ENCODE measurements at regions of chr16 and their contacts with region 1.

Region 1: DNA sequence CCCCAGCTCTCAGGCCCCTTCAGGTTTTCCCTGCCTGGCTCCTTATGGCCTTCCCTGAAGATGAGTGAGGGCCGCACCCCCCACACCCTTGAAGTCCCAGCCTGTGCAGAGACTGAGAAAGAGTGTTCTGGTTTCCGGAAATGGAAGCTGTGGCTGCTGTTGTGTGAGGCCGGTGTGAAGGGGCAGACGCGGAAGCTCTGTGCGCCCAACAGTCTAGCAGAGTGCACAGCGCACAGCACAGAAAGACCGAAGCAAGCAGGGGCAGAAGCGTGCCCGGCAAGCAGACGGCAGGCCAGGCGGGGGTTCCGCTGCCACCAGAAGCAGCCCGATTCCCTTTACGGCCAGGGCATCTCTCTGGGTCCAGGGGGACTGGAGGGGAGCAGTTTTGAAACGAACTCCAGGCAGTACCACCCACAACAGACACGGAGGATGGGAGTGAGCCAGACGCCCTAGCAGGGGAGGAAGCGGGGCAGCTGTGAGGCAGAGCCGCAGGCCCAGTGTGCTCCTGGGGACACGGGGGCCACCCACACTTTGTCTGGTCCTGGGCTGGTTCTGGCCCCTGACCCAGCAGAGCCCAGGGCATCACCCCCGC is 16.7 kb downstream of the TPSG1 start:
- DNase-seq: no peak
- H3K27ac ChIP-seq: no peak overlapping the region
- CTCF ChIP-seq: no peak

Region 2: DNA sequence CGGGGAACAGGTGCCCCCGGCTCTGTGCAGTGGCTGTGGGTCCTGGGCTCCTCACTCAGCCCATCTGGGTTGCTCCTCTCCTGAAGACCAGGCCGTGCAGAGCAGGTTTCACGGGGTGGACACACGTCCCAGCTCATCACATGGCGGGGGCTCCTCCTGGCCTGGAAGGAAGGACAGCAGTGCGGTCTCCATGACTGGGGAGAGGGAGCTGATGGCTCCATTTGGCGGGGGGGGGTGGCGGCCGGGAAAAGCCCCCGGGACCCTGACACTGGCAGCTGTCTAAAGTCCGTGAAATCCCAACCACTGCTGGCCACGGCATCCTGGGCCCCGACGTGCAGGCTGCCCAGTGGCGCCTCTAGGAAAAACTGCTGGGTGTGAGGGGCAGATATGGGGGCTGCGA is 207.7 kb before region 1 on chr16:
- CTCF ChIA-PET with region 1: no interaction called
- POLR2A ChIA-PET with region 1: interaction called, 11 read pairs
- DNase-seq: no peak
- H3K27ac ChIP-seq: no peak overlapping the region
- CTCF ChIP-seq: no peak